Activated naive CD8-positive, alpha-beta T cell treated with anti-CD3 and anti-CD28 coated beads, Interleukin-2, amount 10 ng/mL, durations not matched to agents 7 days and 5 days (primary cell): ENCODE measurements at regions of chr6 and their contacts with region 1.

Region 1: GRCh38 chr6:108260809-108261569 is at the start of gene SNX3:
- DNase-seq: peak; percentile 94
- ATAC-seq: peak; percentile 88
- H3K4me3 Mint-ChIP-seq: peak within 1 kb of the TSS; percentile 84
- H3K27ac Mint-ChIP-seq: peak within 1 kb of the TSS; percentile 89
- H3K4me1 Mint-ChIP-seq: peaks cover 19% of the 10 kb centered on the region
- H3K27me3 Mint-ChIP-seq: peaks cover 4% of the 10 kb centered on the region
- total RNA-seq, gene SNX3: 85.0 to 92.5 TPM

Region 2: GRCh38 chr6:108080010-108080780 is 180.8 kb before region 1 on chr6:
- POLR2A ChIA-PET with region 1: no interaction called
- DNase-seq: no peak
- ATAC-seq: no peak
- H3K4me3 Mint-ChIP-seq: no peak overlapping the region
- H3K27ac Mint-ChIP-seq: no peak overlapping the region
- H3K4me1 Mint-ChIP-seq: peaks cover 5% of the 10 kb centered on the region
- H3K27me3 Mint-ChIP-seq: peaks cover 31% of the 10 kb centered on the region

Region 3: DNA sequence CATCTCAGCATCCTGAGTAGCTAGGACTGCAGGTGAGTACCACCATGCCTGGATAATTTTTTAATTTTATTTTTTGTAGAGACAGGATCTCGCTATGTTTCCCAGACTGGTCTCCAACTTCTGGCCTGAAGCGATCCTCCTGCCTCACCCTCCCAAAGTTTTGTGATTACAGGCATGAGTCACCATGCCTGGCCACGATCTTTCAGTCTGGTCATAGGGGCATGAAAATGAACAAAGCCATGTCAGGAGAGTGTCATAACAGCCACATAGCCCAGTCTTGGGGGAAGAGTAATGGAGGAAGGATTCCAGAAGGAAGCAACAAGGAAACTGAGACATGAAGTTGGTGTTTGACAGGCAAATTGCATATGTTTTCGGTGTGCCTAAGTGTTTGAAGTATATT is 16.8 kb after region 1 on chr6:
- POLR2A ChIA-PET with region 1: interaction called, 11 read pairs
- DNase-seq: no peak
- ATAC-seq: no peak
- H3K4me3 Mint-ChIP-seq: no peak overlapping the region
- H3K27ac Mint-ChIP-seq: no peak overlapping the region
- H3K4me1 Mint-ChIP-seq: no peaks in the 10 kb centered on the region
- H3K27me3 Mint-ChIP-seq: peaks cover 16% of the 10 kb centered on the region

Region 4: GRCh38 chr6:108294727-108295625 is 34.0 kb after region 1 on chr6 and contains the start of gene AFG1L:
- POLR2A ChIA-PET with region 1: interaction called, 32 read pairs
- DNase-seq: peak; percentile 91
- ATAC-seq: peak; percentile 90
- H3K4me3 Mint-ChIP-seq: peak within 1 kb of the TSS; percentile 95
- H3K27ac Mint-ChIP-seq: peak within 1 kb of the TSS; percentile 100
- H3K4me1 Mint-ChIP-seq: peaks cover 24% of the 10 kb centered on the region
- H3K27me3 Mint-ChIP-seq: peaks cover 7% of the 10 kb centered on the region
- total RNA-seq, gene AFG1L: 4.9 to 5.5 TPM